HEK293T (cell line): ENCODE measurements at regions of chr10 and their contacts with region 1.

Region 1: DNA sequence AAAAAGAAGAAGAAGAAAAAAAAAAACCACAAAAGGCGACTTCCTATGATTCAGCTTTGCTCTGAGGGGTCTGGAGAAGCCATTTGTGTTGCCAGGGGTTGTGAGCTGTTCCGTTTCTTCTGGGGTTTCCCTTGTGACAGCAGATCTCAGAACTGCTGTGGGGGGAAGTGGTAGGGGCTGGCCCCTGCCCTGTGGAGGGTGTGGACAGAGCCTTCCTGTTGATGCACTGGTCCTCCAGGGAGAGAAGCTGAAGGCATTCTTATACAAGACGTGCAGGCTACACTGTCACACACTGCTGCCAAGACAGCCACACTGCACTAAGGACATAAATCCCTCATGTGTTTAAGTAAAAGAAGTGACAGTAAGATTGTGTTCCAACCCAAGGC is 17.3 kb upstream of the CSGALNACT2 start:
- DNase-seq: no peak

Region 2: DNA sequence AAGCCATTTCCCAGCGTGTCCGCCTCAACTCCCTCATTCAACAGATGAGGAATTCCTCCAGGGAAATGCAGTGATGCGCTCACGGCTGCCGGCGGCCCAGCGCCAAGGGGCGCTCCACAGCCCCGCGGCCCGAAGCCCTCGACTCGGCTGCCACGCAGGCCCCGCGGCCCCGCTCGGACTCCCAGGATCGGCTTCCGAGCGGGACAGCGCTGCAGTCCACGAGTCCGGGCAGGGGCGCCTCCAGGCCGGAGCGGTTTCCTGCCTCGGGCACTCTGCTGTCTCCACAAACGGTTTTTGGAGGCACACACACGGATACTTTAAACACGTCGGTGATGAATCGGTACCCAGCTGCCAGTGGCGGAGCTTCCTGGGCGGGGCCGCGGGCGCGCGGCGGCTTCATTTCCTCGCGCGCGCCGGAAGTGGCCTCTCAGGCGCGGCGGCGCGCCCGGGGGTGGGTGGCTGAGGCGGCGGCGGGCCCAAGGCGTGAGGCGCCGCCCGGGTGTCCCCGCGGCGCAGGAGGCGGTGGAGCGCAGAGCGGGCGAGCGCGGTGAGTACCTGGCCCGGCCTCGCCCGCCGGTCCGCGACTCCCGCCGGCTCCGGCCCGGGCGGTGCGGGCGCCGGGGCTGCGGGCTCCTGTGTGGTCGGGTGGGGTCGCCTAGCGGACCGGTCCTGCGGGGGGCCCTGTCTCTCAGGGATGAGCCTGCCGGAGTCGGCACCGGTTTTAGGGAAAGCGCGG is 17.3 kb after region 1 on chr10 and contains the start of gene CSGALNACT2:
- CTCF ChIA-PET with region 1: no interaction called
- POLR2A ChIA-PET with region 1: interaction called, 11 read pairs
- DNase-seq: peak; percentile 80

Region 3: DNA sequence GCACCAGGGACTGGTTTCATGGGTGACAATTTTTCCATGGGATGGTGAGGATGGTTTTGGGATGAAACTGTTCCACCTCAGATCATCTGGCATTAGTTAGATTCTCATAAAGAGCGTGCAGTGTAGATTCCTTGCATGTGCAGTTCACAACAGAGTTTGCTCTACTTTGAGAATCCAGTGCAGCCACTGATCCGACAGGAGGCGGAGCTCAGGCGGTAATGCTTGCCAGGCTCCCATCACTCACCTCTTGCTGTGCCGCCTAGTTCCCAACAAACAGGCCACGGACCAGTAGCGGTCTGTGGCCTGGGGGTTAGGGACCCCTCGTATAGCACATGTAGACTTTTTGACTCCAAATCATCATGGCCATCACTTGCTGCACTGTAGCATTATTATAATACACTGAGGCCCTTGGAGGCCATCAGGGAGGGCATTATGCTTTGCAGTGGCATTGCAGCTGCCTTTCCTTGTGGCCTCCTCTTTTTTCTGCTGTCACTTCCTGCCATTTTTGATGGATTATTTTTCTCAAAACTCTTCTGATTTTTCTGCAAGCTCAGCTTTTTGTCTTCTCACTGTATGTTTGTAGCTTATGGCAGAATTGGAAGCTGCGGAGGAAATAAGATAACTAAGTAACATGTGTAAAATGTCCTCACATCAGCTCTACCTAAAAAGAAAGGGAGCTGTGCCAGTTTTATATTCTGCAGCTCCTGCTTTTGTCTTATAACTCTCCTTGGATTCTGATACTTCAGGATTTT is 35.8 kb after region 1 on chr10:
- CTCF ChIA-PET with region 1: no interaction called
- POLR2A ChIA-PET with region 1: no interaction called
- DNase-seq: no peak